Motor neuron (in vitro differentiated cells): ENCODE measurements at regions of chr9 and their contacts with region 1.

Region 1: DNA sequence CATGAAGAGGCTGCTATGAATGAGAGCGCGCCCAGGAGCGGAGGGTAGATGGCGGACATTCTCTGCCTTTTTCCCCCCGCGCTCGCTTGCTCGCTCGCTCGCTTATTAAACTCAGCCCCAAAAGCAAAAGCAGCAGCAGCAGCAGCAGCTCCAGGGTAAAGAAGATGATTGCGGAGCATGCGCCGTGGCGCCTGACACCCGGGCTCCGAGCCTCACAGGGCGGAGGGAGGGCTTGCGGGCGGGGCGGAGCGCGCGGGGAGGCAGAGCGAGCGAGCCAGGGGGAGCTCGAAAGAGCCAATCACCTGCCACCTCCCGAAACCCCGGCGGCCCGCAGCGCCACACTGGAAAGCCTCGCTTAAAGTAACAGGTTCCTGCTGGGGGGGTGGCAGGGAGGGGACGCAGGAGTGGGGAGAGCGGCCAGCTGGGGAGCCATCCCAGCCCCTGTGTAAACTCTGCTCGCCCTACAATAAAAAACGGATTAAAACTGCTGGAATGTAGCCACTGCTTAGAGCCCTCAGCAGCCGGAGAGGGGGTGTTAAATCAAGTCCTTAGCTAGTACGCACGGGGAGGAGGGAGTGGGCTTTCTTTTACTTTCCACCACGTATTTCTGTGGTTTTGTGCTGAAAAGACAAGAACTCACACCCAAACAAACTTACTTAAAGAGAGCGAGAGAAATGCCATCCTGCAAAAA is at the start of gene MLLT3:
- ATAC-seq: peak; percentile 79 to 90 (median 85)
- H3K4me3 ChIP-seq: peak within 1 kb of the TSS; percentile 57 to 71 (median 69)
- H3K27ac ChIP-seq: peak within 1 kb of the TSS; percentile 56 to 69
- H3K4me1 ChIP-seq: peaks cover 4 to 5% of the 10 kb centered on the region in 2 donors
- total RNA-seq, gene MLLT3: 10.8 to 63.2 (median 31.6) TPM

Region 2: GRCh38 chr9:20356403-20357035 is 266.0 kb before region 1 on chr9:
- in situ Hi-C with region 1: loop called in 4 of 9 experiments (anchors 25 kb)
- ATAC-seq: peak; percentile 77 to 97 (median 96)
- H3K4me3 ChIP-seq: peak overlapping the region in 2 of 5 donors; percentile 6 to 8
- H3K27ac ChIP-seq: no peak overlapping the region
- H3K4me1 ChIP-seq: peaks cover 8 to 22% of the 10 kb centered on the region in 2 donors

Region 3: GRCh38 chr9:20722221-20722620 is 99.7 kb after region 1 on chr9:
- in situ Hi-C with region 1: no loop called
- ATAC-seq: peak in 3 of 8 experiments; percentile 31 to 82 (median 70)
- H3K4me3 ChIP-seq: no peak overlapping the region
- H3K27ac ChIP-seq: no peak overlapping the region
- H3K4me1 ChIP-seq: peaks cover 0 to 4% of the 10 kb centered on the region in 2 donors

Region 4: GRCh38 chr9:20930836-20931235 is 308.4 kb after region 1 on chr9:
- in situ Hi-C with region 1: loop called in 4 of 9 experiments (anchors 10 to 25 kb)
- ATAC-seq: no peak
- H3K4me3 ChIP-seq: no peak overlapping the region
- H3K27ac ChIP-seq: no peak overlapping the region
- H3K4me1 ChIP-seq: no peaks in the 10 kb centered on the region

Region 5: GRCh38 chr9:20941174-20941690 is 318.8 kb after region 1 on chr9:
- in situ Hi-C with region 1: loop called in 5 of 9 experiments (anchors 10 to 25 kb)
- ATAC-seq: peak; percentile 81 to 99 (median 97)
- H3K4me3 ChIP-seq: no peak overlapping the region
- H3K27ac ChIP-seq: no peak overlapping the region
- H3K4me1 ChIP-seq: no peaks in the 10 kb centered on the region

Region 6: DNA sequence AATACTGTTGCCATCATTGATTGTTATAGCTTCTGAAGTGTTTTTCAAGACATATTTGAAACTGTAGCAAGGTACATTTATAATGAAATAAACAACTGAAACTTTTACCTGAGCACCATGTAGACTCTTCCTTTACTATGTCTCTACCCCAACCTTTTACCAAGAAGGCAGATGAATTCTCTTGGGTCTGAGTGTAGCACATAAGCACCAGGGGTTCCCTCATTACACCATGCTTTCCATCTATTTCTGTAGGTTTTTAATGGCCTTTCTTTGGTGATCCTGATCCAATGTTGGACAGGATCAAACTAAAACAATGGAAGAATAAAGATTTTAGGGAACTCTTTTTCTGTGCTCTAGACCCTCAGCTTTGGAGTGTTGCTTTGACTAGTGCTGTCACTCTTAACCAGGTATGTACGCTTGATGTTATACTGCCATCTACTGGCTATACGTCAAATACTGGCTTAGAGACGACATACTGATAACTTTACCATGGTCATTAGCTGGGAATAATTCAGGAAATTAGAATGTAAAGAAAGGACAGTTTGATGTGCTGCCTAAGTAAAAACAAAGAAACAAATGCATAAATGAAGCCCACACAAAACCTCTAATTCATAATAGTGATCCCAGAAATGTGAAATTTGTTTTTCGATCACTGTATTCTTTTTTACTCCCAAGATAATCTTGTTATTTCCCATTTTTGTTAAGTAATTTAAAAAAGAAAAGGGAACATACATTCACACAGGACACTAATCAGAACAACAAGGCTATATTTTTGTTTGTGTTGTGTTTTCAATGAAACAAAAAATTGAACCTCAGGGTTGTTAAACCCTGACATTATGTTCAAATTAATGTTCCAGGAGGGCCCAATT is 488.5 kb after region 1 on chr9:
- in situ Hi-C with region 1: loop called in 3 of 9 experiments (anchors 25 kb)
- ATAC-seq: peak; percentile 75 to 99 (median 90)
- H3K4me3 ChIP-seq: no peak overlapping the region
- H3K27ac ChIP-seq: no peak overlapping the region
- H3K4me1 ChIP-seq: no peaks in the 10 kb centered on the region